ENCODE measurements at regions of chr10 and their contacts with region 1.

Region 1: GRCh38 chr10:51074238-51075028 is at the start of gene PRKG1:
- DNase-seq: peak; percentile 68 to 88 (median 85)
- ATAC-seq: peak; percentile 73 to 95 (median 92)
- H3K4me3 ChIP-seq: peak within 1 kb of the TSS; percentile 49 to 85 (median 70)
- H3K27ac ChIP-seq: peak within 1 kb of the TSS; percentile 63 to 92 (median 85)
- H3K4me1 ChIP-seq: peaks cover 0 to 26% (median 7%) of the 10 kb centered on the region in 12 donors
- H3K27me3 ChIP-seq: peaks cover 0 to 40% (median 0%) of the 10 kb centered on the region in 9 donors
- CTCF ChIP-seq: peak in 1 of 12 donors; percentile 7
- POLR2A ChIP-seq: no peak
- total RNA-seq, gene PRKG1: 16.6 to 37.3 (median 30.1) TPM

Region 2: DNA sequence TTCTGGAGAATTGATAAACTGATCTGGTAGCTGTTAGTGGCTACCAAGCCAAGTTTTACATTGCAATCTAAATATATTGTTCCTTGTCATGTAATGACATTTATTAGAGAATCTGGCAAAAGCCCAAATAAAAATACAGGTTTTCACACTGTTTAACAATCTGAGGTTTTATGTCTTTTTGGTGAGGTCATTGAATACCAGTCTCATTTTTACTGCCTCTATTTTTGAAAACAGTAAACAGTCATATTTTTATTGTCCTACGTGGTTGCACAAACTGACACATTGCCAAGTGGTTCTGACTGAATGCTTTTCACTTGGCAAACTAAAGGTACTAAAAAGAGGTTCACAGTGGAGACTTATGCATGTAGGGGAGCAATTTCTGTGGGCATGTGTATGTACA is 157.3 kb after region 1 on chr10:
- intact Hi-C with region 1: loop called in 1 of 10 experiments (anchors 10 kb)
- DNase-seq: no peak
- ATAC-seq: peak in 1 of 4 donors; percentile 21
- H3K4me3 ChIP-seq: no peak overlapping the region
- H3K27ac ChIP-seq: peak overlapping the region; percentile 6 to 77 (median 40)
- H3K4me1 ChIP-seq: peaks cover 0 to 59% (median 22%) of the 10 kb centered on the region in 12 donors
- H3K27me3 ChIP-seq: no peaks in the 10 kb centered on the region
- CTCF ChIP-seq: no peak
- POLR2A ChIP-seq: no peak

Region 3: DNA sequence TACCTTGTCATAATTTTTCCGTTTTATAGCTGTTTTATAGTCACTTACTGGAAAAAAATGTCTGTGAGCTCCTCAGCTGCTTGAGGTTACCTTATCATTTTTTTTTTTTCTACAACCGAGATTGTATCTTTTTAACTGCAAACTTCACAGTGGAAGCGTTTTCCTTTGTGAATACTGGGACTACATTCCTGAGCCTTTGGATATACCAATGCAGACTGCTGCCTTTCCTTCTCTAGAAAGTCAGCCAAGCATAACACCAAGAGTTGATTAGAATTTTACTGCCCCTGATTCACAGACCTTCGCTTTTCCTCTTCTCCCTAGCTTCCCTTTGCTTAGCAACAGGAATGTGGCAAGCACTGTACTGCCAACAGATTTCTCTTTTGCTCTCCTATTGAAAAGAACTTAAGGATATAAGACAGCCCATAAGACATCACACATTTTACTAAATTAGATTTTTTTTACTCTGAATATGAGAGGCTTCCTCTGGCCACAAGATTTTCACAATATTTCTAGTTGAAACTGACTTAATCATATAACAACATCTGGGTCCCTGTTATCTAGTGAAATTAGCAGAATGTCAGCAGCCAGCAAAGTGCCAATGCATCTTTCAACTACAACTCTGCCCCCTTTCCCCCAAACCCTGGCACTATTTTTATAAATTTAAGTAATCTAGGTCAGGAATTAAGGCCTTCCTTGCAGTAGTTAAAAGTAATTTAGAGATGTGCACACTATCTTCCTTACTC is 170.5 kb after region 1 on chr10:
- intact Hi-C with region 1: loop called in 1 of 10 experiments (anchors 10 kb)
- DNase-seq: no peak
- ATAC-seq: peak; percentile 55 to 87 (median 84)
- H3K4me3 ChIP-seq: peak overlapping the region in 6 of 12 donors; percentile 1 to 25 (median 10)
- H3K27ac ChIP-seq: peak overlapping the region; percentile 7 to 79 (median 54)
- H3K4me1 ChIP-seq: peaks cover 0 to 59% (median 16%) of the 10 kb centered on the region in 12 donors
- H3K27me3 ChIP-seq: no peaks in the 10 kb centered on the region
- CTCF ChIP-seq: no peak
- POLR2A ChIP-seq: no peak

Region 4: GRCh38 chr10:51301644-51302043 is 227.2 kb after region 1 on chr10:
- intact Hi-C with region 1: loop called in 1 of 10 experiments (anchors 10 kb)
- DNase-seq: peak in 1 of 5 donors; percentile 23
- ATAC-seq: peak; percentile 45 to 68 (median 61)
- H3K4me3 ChIP-seq: no peak overlapping the region
- H3K27ac ChIP-seq: peak overlapping the region in 11 of 12 donors; percentile 11 to 81 (median 52)
- H3K4me1 ChIP-seq: peaks cover 0 to 41% (median 13%) of the 10 kb centered on the region in 12 donors
- H3K27me3 ChIP-seq: no peaks in the 10 kb centered on the region
- CTCF ChIP-seq: no peak
- POLR2A ChIP-seq: no peak

Region 5: DNA sequence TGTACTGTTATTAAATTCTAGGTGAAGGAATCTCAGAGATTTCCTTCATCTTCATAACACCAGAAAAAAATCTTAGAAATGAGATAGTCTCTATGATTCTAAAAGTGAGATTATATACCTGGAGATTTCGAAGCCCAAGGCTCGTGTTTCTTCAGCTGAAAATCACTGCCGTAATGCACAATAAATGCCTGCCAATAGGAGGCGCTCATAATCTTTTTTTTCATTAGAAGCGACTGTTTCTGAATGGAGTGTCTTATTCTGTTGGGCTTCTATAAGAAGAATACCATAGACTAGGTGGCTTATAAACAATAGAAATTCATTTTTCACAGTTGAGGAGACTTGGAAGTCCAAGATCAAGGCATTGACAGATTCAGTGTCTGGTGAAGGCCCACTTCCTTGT is 294.5 kb after region 1 on chr10:
- intact Hi-C with region 1: loop called in 1 of 10 experiments (anchors 5 kb)
- DNase-seq: no peak
- ATAC-seq: no peak
- H3K4me3 ChIP-seq: no peak overlapping the region
- H3K27ac ChIP-seq: no peak overlapping the region
- H3K4me1 ChIP-seq: peaks cover 0 to 43% (median 11%) of the 10 kb centered on the region in 12 donors
- H3K27me3 ChIP-seq: no peaks in the 10 kb centered on the region
- CTCF ChIP-seq: peak in 1 of 12 donors; percentile 7
- POLR2A ChIP-seq: no peak

Region 6: DNA sequence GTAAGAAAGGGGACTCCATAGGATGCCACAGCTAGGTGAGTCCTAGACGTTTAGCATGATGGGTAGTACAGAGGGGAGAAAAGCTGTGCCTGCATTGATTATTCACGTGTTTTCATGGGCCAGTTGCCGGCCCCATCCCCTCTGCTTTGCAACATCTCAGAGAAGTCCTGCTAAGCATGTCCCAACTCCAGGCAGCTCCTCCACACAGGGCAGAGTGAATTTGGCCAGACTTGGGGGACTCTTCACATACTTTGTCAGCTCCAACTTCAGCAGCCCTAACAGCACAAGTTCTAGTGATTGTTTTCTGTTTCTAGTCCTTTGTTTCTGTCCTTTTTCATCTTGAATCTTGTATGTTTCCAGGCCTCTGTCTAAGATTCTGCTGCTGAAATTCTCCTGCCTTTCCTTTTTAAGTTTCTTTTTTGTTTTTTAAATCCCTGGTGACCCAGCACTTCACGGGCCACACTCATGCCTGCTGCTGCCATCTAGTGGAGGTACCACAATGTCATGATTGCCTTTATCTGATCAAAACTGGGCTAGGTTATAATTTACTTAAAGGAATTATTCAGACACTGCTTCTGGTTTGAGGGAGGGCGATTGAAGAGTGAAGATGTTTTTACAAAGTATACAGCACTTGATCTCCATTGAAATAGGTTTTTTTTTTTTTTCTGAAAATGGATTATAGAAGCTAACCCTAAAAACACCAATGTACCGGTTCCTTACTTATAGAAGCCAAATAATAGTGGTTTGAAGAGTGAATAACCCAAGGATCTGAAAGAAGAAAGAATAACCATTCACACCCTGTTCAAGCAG is 348.1 kb after region 1 on chr10:
- intact Hi-C with region 1: loop called (anchors 2 to 10 kb)
- DNase-seq: peak; percentile 52 to 61 (median 57)
- ATAC-seq: peak; percentile 47 to 72 (median 60)
- H3K4me3 ChIP-seq: no peak overlapping the region
- H3K27ac ChIP-seq: peak overlapping the region; percentile 52 to 80 (median 72)
- H3K4me1 ChIP-seq: peaks cover 0 to 48% (median 10%) of the 10 kb centered on the region in 12 donors
- H3K27me3 ChIP-seq: no peaks in the 10 kb centered on the region
- CTCF ChIP-seq: peak; percentile 39 to 84 (median 70)
- POLR2A ChIP-seq: no peak

Region 7: DNA sequence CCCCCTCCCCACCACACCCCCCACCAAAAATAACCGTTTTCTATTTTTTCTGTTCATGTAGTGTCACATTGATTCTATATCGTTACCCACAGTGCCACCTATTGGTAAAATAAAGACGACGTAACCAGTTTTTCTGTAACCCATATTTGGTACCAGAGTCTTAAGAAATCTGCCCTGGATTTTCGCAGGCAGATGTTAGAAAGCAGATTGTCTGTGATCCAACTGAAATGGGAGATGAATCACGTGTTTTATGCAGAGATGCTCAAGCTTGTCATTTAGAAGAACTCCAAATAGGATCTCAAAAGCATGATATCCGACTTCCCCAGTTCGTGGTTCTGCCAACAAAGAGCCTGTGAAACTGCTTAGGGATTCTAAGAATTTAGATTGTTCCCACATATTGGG is 886.1 kb after region 1 on chr10:
- intact Hi-C with region 1: loop called in 7 of 10 experiments (anchors 5 to 10 kb)
- DNase-seq: no peak
- ATAC-seq: peak; percentile 30 to 85 (median 52)
- H3K4me3 ChIP-seq: no peak overlapping the region
- H3K27ac ChIP-seq: no peak overlapping the region
- H3K4me1 ChIP-seq: peaks cover 0 to 13% (median 1%) of the 10 kb centered on the region in 12 donors
- H3K27me3 ChIP-seq: no peaks in the 10 kb centered on the region
- CTCF ChIP-seq: peak; percentile 26 to 63 (median 56)
- POLR2A ChIP-seq: no peak